ENCODE measurements at regions of chr9 and their contacts with region 1.

Region 1: GRCh38 chr9:17462869-17463464 is 115.9 kb upstream of the SH3GL2 start:
- DNase-seq: peak; percentile 37
- H3K4me3 ChIP-seq: no peak overlapping the region
- H3K27ac ChIP-seq: no peak overlapping the region
- H3K4me1 ChIP-seq: no peaks in the 10 kb centered on the region
- H3K27me3 ChIP-seq: no peaks in the 10 kb centered on the region
- CTCF ChIP-seq: peak; percentile 59

Region 2: DNA sequence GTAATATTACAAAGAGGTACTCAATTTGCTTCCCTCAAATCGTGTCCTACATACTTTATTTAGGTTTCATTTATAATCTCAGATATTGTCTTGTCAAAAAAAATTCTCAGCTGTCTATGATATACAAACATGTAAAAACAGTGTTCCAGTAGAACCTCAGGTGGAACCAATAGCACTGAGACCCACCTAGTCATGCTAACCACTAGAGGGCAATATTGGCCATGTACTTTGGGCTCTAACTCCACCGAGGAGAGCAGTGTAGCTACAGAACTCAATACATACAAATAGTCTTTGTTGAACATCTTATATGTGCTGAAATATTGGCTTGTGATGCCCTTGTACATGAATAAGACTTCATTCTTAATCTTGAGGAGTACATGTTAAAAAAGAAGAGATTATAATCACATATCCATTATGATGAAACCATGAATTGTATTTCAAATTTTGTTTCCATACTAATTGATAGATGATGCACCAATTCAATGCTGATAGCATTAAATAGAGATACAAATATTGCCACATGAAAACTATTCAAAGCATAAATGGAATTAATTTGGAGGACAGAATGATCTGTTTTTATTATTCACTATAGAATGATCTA is 399.3 kb before region 1 on chr9:
- CTCF ChIA-PET with region 1: interaction called, 4 read pairs
- POLR2A ChIA-PET with region 1: no interaction called
- intact Hi-C with region 1: loop called (anchors 2 kb)
- DNase-seq: peak; percentile 39
- H3K4me3 ChIP-seq: no peak overlapping the region
- H3K27ac ChIP-seq: no peak overlapping the region
- H3K4me1 ChIP-seq: no peaks in the 10 kb centered on the region
- H3K27me3 ChIP-seq: no peaks in the 10 kb centered on the region
- CTCF ChIP-seq: peak; percentile 64

Region 3: DNA sequence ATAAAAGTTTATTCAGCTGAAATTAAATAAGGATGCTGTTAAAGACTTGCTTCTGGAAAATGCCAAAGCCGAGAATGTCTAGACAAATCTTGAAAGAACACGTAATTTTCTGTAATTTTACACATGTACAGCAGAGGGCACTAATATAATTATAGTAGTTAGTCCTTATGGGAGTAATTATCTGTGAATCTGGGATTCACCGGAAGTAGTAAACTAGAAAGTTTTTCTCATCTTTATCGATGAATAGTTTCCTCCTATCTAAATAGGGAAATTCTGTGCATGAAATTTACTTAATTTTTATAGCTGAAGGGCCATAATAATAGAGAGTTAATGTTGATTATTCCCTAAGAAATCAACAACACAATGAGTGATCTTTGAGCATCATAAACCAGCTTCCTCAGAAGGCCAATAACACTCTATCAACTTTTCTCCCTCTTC is 346.5 kb before region 1 on chr9:
- CTCF ChIA-PET with region 1: no interaction called
- POLR2A ChIA-PET with region 1: no interaction called
- intact Hi-C with region 1: loop called (anchors 2 kb)
- DNase-seq: peak; percentile 48
- H3K4me3 ChIP-seq: no peak overlapping the region
- H3K27ac ChIP-seq: no peak overlapping the region
- H3K4me1 ChIP-seq: no peaks in the 10 kb centered on the region
- H3K27me3 ChIP-seq: no peaks in the 10 kb centered on the region
- CTCF ChIP-seq: peak; percentile 53

Measured in A673 (cell line).